ENCODE measurements at regions of chr1 and their contacts with region 1.

Region 1: GRCh38 chr1:53278201-53278725 is 39.9 kb upstream of the MAGOH start:
- DNase-seq: peak in 1 of 2 donors; percentile 74
- ATAC-seq: peak; percentile 69

Region 2: GRCh38 chr1:53393325-53393792 is 115.1 kb after region 1 on chr1:
- intact Hi-C with region 1: loop called (anchors 2 to 5 kb)
- DNase-seq: peak in 1 of 2 donors; percentile 72
- ATAC-seq: peak; percentile 88

Measured in left colon (tissue), 2 donors.